CD8-positive, alpha-beta memory T cell (primary cell): ENCODE measurements at regions of chr9 and their contacts with region 1.

Region 1: GRCh38 chr9:74952281-74953151 is at the start of gene C9orf40:
- DNase-seq: peak; percentile 83 to 93 (median 85)
- H3K4me3 ChIP-seq: peak within 1 kb of the TSS; percentile 94
- H3K4me3 Mint-ChIP-seq: peak within 1 kb of the TSS; percentile 92 to 99 (median 99)
- H3K27ac ChIP-seq: peak within 1 kb of the TSS; percentile 87
- H3K27ac Mint-ChIP-seq: peak within 1 kb of the TSS; percentile 77 to 98 (median 97)
- H3K4me1 ChIP-seq: peaks cover 6% of the 10 kb centered on the region
- H3K4me1 Mint-ChIP-seq: peaks cover 15 to 24% (median 23%) of the 10 kb centered on the region in 3 donors
- H3K27me3 ChIP-seq: no peaks in the 10 kb centered on the region
- H3K27me3 Mint-ChIP-seq: peaks cover 0 to 3% of the 10 kb centered on the region in 2 donors
- total RNA-seq, gene C9orf40: 21.4 to 22.0 TPM

Region 2: GRCh38 chr9:74940600-74940999 is 11.9 kb before region 1 on chr9:
- CTCF ChIA-PET with region 1: interaction called, 21 read pairs
- POLR2A ChIA-PET with region 1: interaction called, 10 read pairs
- DNase-seq: no peak
- H3K4me3 ChIP-seq: no peak overlapping the region
- H3K4me3 Mint-ChIP-seq: no peak overlapping the region
- H3K27ac ChIP-seq: no peak overlapping the region
- H3K27ac Mint-ChIP-seq: no peak overlapping the region
- H3K4me1 ChIP-seq: no peaks in the 10 kb centered on the region
- H3K4me1 Mint-ChIP-seq: peaks cover 9 to 13% (median 10%) of the 10 kb centered on the region in 3 donors
- H3K27me3 ChIP-seq: no peaks in the 10 kb centered on the region
- H3K27me3 Mint-ChIP-seq: peaks cover 0 to 5% of the 10 kb centered on the region in 2 donors

Region 3: GRCh38 chr9:74963056-74963455 is 10.5 kb after region 1 on chr9:
- CTCF ChIA-PET with region 1: interaction called, 11 read pairs
- POLR2A ChIA-PET with region 1: interaction called, 8 read pairs
- DNase-seq: no peak
- H3K4me3 ChIP-seq: no peak overlapping the region
- H3K4me3 Mint-ChIP-seq: no peak overlapping the region
- H3K27ac ChIP-seq: no peak overlapping the region
- H3K27ac Mint-ChIP-seq: peak overlapping the region in 1 of 8 donors; percentile 55
- H3K4me1 ChIP-seq: no peaks in the 10 kb centered on the region
- H3K4me1 Mint-ChIP-seq: peaks cover 0 to 6% (median 0%) of the 10 kb centered on the region in 3 donors
- H3K27me3 ChIP-seq: no peaks in the 10 kb centered on the region
- H3K27me3 Mint-ChIP-seq: no peaks in the 10 kb centered on the region

Region 4: DNA sequence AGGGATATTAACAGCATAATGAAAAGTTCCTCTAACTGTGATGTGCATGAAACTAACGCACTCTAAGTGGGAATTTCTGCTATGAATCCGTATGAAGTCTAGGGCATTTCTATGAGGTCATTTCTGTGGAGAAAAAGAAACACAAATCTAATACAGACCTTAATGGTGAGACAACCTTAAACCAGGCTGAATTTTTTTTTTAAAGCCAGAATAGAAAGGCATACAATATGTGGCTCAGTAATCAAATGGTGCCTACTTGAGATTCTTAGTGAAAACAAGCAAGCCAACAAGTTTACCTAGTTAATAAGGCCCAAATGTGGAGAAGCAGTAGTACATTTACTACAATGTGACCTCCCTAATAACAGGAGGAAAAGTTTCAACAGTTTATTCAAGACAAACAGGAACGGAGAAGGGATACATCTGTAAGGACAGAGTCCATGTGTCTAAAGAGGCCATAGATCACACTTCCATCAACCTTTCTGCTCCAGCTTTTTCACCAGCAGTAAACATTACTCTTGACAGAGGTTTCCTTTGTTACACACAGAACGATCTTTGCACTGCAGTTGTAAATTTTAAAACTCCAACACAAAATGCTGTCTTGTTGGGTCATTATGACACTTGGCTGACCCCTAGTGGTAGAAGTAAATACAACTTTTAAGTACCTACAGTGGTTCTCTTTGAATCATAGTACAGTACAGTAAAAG is 49.4 kb after region 1 on chr9:
- CTCF ChIA-PET with region 1: interaction called, 12 read pairs
- POLR2A ChIA-PET with region 1: no interaction called
- DNase-seq: peak in 2 of 5 donors; percentile 59 to 64
- H3K4me3 ChIP-seq: no peak overlapping the region
- H3K4me3 Mint-ChIP-seq: no peak overlapping the region
- H3K27ac ChIP-seq: no peak overlapping the region
- H3K27ac Mint-ChIP-seq: no peak overlapping the region
- H3K4me1 ChIP-seq: no peaks in the 10 kb centered on the region
- H3K4me1 Mint-ChIP-seq: peaks cover 0 to 10% (median 5%) of the 10 kb centered on the region in 3 donors
- H3K27me3 ChIP-seq: no peaks in the 10 kb centered on the region
- H3K27me3 Mint-ChIP-seq: no peaks in the 10 kb centered on the region

Region 5: DNA sequence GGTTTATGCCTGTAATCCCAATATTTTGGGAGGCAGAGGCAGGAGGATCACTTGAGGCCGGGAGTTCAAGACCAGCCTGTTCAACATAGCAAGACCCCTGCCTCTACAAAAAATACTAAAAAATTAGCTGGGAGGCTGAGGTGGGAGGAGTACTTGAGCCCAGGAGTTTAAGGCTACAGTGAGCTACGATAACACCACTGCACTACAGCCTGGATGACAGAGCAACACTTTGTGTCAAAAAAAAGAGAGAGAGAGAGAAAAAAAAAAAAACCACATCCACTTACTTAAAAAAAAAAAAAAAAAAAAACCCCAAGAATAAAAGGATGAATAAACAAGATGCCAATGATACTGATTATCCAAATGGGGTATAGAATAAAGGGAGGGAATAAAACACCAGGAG is 61.2 kb after region 1 on chr9:
- CTCF ChIA-PET with region 1: interaction called, 10 read pairs
- POLR2A ChIA-PET with region 1: no interaction called
- DNase-seq: no peak
- H3K4me3 ChIP-seq: no peak overlapping the region
- H3K4me3 Mint-ChIP-seq: peak overlapping the region in 3 of 7 donors; percentile 24 to 60 (median 34)
- H3K27ac ChIP-seq: no peak overlapping the region
- H3K27ac Mint-ChIP-seq: peak overlapping the region in 5 of 8 donors; percentile 5 to 80 (median 55)
- H3K4me1 ChIP-seq: peaks cover 15% of the 10 kb centered on the region
- H3K4me1 Mint-ChIP-seq: peaks cover 33 to 57% (median 38%) of the 10 kb centered on the region in 3 donors
- H3K27me3 ChIP-seq: no peaks in the 10 kb centered on the region
- H3K27me3 Mint-ChIP-seq: peaks cover 0 to 1% of the 10 kb centered on the region in 2 donors

Region 6: GRCh38 chr9:75027187-75028107 is 74.9 kb after region 1 on chr9:
- CTCF ChIA-PET with region 1: interaction called, 47 read pairs
- POLR2A ChIA-PET with region 1: interaction called, 35 read pairs
- DNase-seq: peak in 4 of 5 donors; percentile 27 to 68 (median 44)
- H3K4me3 ChIP-seq: peak overlapping the region; percentile 87
- H3K4me3 Mint-ChIP-seq: peak overlapping the region; percentile 84 to 98 (median 98)
- H3K27ac ChIP-seq: peak overlapping the region; percentile 75
- H3K27ac Mint-ChIP-seq: peak overlapping the region; percentile 77 to 98 (median 96)
- H3K4me1 ChIP-seq: peaks cover 35% of the 10 kb centered on the region
- H3K4me1 Mint-ChIP-seq: peaks cover 46 to 55% (median 54%) of the 10 kb centered on the region in 3 donors
- H3K27me3 ChIP-seq: no peaks in the 10 kb centered on the region
- H3K27me3 Mint-ChIP-seq: no peaks in the 10 kb centered on the region

Region 7: GRCh38 chr9:75088260-75088905 is 135.9 kb after region 1 on chr9 and contains the start of gene OSTF1:
- CTCF ChIA-PET with region 1: interaction called, 7 read pairs
- POLR2A ChIA-PET with region 1: interaction called, 23 read pairs
- DNase-seq: peak; percentile 90 to 96 (median 95)
- H3K4me3 ChIP-seq: peak within 1 kb of the TSS; percentile 89
- H3K4me3 Mint-ChIP-seq: peak within 1 kb of the TSS; percentile 92 to 100 (median 99)
- H3K27ac ChIP-seq: peak within 1 kb of the TSS; percentile 95
- H3K27ac Mint-ChIP-seq: peak within 1 kb of the TSS; percentile 95 to 99 (median 98)
- H3K4me1 ChIP-seq: peaks cover 61% of the 10 kb centered on the region
- H3K4me1 Mint-ChIP-seq: peaks cover 64 to 83% (median 78%) of the 10 kb centered on the region in 3 donors
- H3K27me3 ChIP-seq: no peaks in the 10 kb centered on the region
- H3K27me3 Mint-ChIP-seq: no peaks in the 10 kb centered on the region
- total RNA-seq, gene OSTF1: 71.9 to 76.0 TPM